Lower leg skin (tissue), 4 donors: ENCODE measurements at regions of chr16 and their contacts with region 1.

Region 1: GRCh38 chr16:2374644-2375043 is 34.1 kb upstream of the ABCA3 start:
- DNase-seq: no peak
- H3K4me3 ChIP-seq: no peak overlapping the region
- CTCF ChIP-seq: no peak
- POLR2A ChIP-seq: no peak

Region 2: GRCh38 chr16:2299121-2299914 is 75.3 kb before region 1 on chr16:
- intact Hi-C with region 1: loop called (anchors 2 kb)
- DNase-seq: no peak
- H3K4me3 ChIP-seq: no peak overlapping the region
- CTCF ChIP-seq: no peak
- POLR2A ChIP-seq: no peak

Region 3: DNA sequence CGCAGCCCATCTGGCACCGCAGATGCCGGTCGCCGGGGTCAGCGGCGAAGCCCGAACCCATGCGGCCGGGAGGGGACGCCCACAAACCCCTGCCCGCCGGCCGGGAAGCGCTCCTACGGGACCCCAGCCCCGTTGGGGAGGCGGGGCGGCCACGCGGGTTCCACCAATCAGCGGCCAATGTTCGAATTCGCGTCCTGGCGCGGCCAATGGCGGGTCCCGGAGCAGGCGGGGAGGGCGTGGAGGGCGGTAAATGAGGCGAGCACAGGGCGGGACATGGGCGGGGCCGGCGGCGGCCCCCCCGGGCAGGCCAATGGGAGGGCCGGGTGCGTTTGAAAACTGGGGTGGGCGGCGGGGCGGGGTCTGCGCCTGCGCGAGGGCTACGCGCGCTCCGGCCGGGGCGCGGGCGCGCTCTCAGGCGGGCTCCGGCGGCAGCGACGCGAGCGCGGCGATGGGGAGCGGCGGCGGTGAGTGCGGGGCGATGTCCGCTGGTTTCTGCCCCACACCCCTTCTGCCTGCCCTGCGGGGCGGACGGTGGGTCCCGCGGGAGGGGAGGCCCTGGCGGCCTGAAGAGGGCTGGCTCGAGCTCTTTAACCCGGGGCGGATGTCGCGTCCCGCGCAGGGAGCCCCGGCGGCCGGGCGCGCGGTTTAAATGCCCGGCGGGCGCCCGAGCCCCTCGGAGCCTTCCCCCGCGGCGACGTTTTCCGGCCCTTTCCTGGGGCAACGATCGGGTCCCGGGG is 54.6 kb after region 1 on chr16 and contains the start of gene CCNF:
- intact Hi-C with region 1: no loop called
- DNase-seq: peak; percentile 96 to 99
- H3K4me3 ChIP-seq: peak within 1 kb of the TSS; percentile 57
- CTCF ChIP-seq: no peak
- POLR2A ChIP-seq: no peak
- total RNA-seq, gene CCNF: 5.6 to 17.7 (median 11.3) TPM

Region 4: DNA sequence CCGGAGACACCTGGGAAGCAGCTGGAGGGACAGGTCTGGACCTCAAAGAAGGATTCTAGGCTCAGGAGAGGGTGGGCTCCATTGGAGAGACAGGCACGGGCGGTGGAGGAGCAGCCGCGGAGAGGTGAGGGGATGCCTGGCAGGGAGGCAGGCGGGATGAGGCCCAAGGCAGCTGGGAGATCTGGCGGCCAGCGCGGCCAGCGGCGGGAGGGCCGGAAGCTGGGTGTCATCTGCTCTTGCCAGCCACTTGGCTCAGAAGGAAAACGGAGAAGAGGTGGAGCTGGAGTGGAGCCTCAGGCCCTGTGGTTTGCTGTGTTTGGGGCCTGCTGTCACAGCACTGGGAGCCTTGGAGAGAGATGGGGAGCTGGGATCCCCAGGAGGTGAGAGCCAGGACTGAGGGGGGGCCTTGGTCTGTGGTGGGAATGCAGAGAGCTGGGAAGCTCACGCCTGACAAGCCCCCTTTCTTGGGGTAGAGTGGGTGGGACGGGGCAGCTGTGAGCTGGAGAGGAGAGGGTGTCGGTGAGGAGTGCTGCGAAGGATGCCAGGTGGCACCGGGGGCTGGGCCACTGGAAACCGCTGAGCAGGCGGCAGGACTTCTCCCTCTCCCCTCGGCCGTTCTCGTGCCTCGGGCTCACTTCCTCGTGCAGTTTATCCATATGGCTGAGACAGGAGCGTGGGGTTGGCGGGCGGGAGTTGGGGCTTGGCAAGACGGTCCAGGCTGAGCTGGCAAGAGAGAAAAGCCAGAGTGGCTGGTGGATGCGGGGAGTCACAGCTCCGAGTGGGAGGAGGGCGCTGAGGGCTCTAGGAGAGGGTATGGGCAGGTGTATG is 108.3 kb after region 1 on chr16:
- intact Hi-C with region 1: no loop called
- DNase-seq: peak in 1 of 2 donors; percentile 94
- H3K4me3 ChIP-seq: no peak overlapping the region
- CTCF ChIP-seq: no peak
- POLR2A ChIP-seq: no peak